ENCODE measurements at regions of chr20 and their contacts with region 1.

Region 1: GRCh38 chr20:1619861-1620444 is at the start of gene SIRPB1:
- DNase-seq: no peak
- ATAC-seq: peak in 3 of 4 donors; percentile 45 to 56 (median 49)
- H3K4me3 ChIP-seq: peak within 1 kb of the TSS in 1 of 12 donors; percentile 41
- H3K27ac ChIP-seq: peak within 1 kb of the TSS in 2 of 12 donors; percentile 26 to 88
- H3K4me1 ChIP-seq: peaks cover 0 to 67% (median 0%) of the 10 kb centered on the region in 12 donors
- H3K27me3 ChIP-seq: no peaks in the 10 kb centered on the region
- CTCF ChIP-seq: no peak
- POLR2A ChIP-seq: no peak
- total RNA-seq, gene SIRPB1: 0.19 to 14.0 (median 2.1) TPM

Region 2: GRCh38 chr20:1299522-1299921 is 320.4 kb before region 1 on chr20:
- intact Hi-C with region 1: no loop called
- DNase-seq: no peak
- ATAC-seq: peak in 1 of 4 donors; percentile 8
- H3K4me3 ChIP-seq: no peak overlapping the region
- H3K27ac ChIP-seq: no peak overlapping the region
- H3K4me1 ChIP-seq: peaks cover 0 to 9% (median 0%) of the 10 kb centered on the region in 12 donors
- H3K27me3 ChIP-seq: no peaks in the 10 kb centered on the region
- CTCF ChIP-seq: no peak
- POLR2A ChIP-seq: no peak

Region 3: DNA sequence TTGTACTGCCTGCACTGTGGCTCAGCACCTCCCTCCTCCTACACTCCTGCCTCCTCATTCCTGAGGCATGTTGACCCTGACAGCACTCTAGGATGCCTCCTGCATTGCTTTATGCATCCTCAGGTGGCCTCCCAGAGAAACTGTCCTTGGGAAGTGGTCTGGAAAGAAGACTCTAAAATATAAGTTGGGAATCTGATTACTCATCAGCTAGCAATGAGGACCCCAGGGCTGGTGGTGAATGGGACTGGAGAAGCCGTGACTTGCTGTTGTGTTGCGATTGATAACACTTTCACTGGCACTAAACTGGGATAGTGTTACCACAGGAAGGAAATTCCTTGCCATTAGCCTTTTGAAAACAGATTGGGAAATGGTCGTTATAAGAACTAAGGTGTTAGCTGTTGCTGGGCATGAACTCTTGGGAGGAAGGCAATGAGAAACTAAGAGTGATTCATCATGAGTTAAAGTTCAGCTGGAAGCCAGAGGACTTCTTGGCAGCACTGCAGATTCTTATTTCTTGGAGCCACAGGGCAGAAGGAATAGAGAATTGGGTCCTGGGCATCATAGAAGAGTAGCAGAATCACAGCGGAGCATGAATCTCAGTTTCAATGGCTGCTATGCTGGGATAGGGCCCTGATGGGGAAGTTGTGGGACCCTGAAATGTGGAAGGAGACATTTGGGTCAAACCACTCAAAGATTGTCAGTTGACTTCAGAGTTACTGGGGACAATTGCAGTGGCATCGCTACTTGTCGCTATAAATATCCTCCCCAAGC is 52.4 kb before region 1 on chr20:
- intact Hi-C with region 1: loop called in 1 of 10 experiments (anchors 10 kb)
- DNase-seq: no peak
- ATAC-seq: no peak
- H3K4me3 ChIP-seq: no peak overlapping the region
- H3K27ac ChIP-seq: peak overlapping the region in 1 of 12 donors; percentile 66
- H3K4me1 ChIP-seq: peaks cover 0 to 41% (median 0%) of the 10 kb centered on the region in 12 donors
- H3K27me3 ChIP-seq: peaks cover 0 to 16% (median 0%) of the 10 kb centered on the region in 9 donors
- CTCF ChIP-seq: no peak
- POLR2A ChIP-seq: no peak

Region 4: DNA sequence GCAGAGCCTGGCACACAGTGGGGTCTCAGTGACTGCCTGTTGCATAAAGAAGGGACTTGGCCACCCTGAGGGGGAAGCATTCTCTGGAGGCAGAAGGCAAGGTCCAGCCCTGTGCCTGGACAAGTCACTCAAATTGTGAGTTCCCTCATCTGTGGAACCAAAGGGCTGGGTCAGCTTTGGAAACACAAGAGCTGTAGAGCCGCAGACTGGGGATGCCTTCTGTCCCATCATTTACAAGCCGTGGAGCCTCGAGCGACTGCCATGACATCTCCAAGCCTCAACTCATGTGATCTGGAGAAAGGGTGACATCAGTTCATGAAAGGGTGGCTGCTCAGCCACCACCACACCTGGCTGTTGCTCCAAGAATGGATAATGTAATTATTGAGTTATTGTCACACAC is 42.0 kb before region 1 on chr20:
- intact Hi-C with region 1: loop called in 4 of 10 experiments (anchors 2 kb)
- DNase-seq: no peak
- ATAC-seq: no peak
- H3K4me3 ChIP-seq: no peak overlapping the region
- H3K27ac ChIP-seq: no peak overlapping the region
- H3K4me1 ChIP-seq: no peaks in the 10 kb centered on the region
- H3K27me3 ChIP-seq: no peaks in the 10 kb centered on the region
- CTCF ChIP-seq: no peak
- POLR2A ChIP-seq: no peak

Region 5: DNA sequence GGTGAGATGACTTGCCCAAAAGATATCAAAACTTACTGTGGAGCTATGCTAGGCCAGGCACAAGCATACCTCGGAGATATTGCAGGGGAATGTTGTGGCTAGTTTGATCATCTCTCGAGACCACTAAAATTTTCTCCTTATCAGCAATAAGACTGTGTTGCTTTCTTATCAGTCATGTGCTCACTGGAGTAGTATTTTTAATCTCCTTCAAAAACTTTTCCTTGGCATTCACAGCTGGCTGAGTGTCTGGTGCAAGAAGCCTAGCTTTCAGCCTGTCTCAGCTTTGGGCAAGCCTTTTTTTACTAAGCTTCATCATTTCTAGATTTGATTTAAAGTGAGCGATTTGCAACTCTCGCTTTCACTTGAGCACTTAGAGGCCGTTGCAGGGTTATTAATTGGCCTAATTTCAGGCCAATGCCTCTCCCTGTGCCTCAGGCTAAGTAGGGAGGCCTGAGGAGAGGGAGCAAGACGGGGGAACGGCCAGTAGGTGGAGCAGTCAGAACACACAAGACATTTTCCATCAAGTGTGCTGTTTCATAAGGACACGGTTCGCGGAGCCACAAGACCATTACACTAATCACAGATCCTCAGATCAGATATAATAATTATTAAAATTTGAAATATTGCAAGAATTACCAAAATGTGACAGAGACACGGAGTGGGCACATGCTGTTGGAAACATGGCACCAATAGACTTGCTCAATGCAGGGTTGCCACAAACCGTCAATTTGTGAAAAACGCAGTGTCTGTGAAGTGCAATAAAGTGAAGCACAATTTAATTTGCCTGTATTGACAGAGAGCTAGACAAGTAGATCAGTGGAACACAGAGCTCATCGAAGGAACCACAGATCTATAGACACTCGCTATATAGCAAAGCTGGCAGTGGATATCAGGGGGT is 144.4 kb after region 1 on chr20:
- intact Hi-C with region 1: no loop called
- DNase-seq: peak; percentile 61 to 80 (median 74)
- ATAC-seq: peak; percentile 77 to 95 (median 89)
- H3K4me3 ChIP-seq: no peak overlapping the region
- H3K27ac ChIP-seq: no peak overlapping the region
- H3K4me1 ChIP-seq: peaks cover 0 to 4% (median 0%) of the 10 kb centered on the region in 12 donors
- H3K27me3 ChIP-seq: no peaks in the 10 kb centered on the region
- CTCF ChIP-seq: peak; percentile 59 to 81 (median 72)
- POLR2A ChIP-seq: no peak

Measured in heart left ventricle (tissue), 16 donors.